Right ventricle myocardium inferior (tissue), 1 donor: ENCODE measurements at regions of chr1 and their contacts with region 1.

Region 1: GRCh38 chr1:231528172-231529029 is at the start of gene TSNAX:
- DNase-seq: peak; percentile 94
- ATAC-seq: peak; percentile 99
- total RNA-seq, gene TSNAX: 22.6 TPM

Region 2: GRCh38 chr1:231357831-231358354 is 170.5 kb before region 1 on chr1:
- intact Hi-C with region 1: loop called (anchors 5 kb)
- DNase-seq: no peak
- ATAC-seq: peak; percentile 72

Region 3: DNA sequence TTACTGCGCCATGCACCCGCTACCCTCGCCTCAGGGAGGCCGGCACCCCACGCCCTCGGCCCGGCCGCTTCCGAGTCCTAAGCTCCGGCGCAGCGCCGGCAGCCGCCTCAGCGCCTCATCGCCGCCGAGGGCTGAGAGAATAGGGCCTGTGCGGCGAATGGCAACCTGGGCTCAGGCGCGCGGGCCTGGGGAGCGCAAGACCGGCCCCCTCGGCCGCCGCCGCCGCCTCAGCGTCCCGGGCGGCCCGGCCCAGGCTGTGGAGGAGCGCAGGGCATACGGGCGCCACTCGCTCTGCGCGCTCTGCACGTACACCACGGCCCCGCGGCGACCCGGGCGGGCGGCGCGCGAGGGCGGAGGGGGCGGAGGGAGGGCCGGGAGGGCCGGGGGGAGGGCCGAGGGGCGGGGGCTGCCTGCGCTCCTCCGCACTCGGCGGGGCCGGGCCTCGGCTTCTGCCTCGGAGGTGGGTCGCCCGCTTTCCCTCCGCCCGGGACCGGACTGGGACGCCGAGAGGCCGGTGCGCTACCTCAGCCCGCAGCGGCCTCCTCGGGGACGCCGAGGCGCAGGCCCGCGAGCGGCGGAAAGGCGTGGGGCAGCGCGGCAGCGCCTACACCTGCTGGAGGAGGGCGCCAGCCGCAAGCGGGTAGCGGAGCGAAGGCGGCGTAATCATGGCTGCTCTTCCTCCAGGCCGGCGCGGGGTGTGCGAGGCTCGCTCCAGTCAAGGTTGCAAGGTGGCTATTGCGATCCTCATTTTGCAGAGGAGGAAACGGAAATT is 106.2 kb before region 1 on chr1 and contains the start of gene EGLN1:
- intact Hi-C with region 1: loop called (anchors 1 kb)
- DNase-seq: peak; percentile 94
- ATAC-seq: peak; percentile 94
- total RNA-seq, gene EGLN1: 86.0 TPM

Region 4: GRCh38 chr1:231544943-231545592 is 16.7 kb after region 1 on chr1:
- intact Hi-C with region 1: loop called (anchors 2 kb)
- DNase-seq: no peak
- ATAC-seq: no peak

Region 5: GRCh38 chr1:231590453-231591198 is 62.2 kb after region 1 on chr1:
- intact Hi-C with region 1: loop called (anchors 5 kb)
- DNase-seq: no peak
- ATAC-seq: peak; percentile 81